ENCODE measurements at regions of chrX and their contacts with region 1.

Region 1: DNA sequence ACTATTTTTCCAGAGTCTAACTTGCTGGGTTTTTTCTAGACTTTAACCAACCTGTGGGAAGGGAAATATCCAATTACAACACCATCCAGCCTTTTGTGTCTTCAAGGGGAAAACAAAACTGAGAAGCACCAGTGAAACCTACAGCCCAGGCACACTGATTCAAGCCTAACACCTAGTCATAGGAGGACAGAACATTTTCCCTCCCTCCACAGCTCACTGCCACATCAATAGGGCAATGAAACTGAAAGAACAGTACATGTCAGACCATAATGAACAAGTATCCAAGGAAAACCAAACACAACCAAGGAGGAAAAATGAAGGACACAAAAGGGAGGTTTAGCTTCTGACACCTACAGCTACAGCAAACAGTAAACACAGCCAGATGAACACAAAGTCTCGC is 17.6 kb downstream of the MAGEA8 start:
- DNase-seq: no peak
- H3K4me3 Mint-ChIP-seq: no peak overlapping the region
- H3K27ac Mint-ChIP-seq: no peak overlapping the region
- H3K4me1 Mint-ChIP-seq: peaks cover 9% of the 10 kb centered on the region
- H3K27me3 Mint-ChIP-seq: no peaks in the 10 kb centered on the region

Region 2: GRCh38 chrX:149837639-149838038 is 60.9 kb before region 1 on chrX:
- intact Hi-C with region 1: loop called (anchors 2 kb)
- DNase-seq: peak; percentile 57
- H3K4me3 Mint-ChIP-seq: no peak overlapping the region
- H3K27ac Mint-ChIP-seq: peak overlapping the region; percentile 56
- H3K4me1 Mint-ChIP-seq: peaks cover 6% of the 10 kb centered on the region
- H3K27me3 Mint-ChIP-seq: peaks cover 1% of the 10 kb centered on the region

Measured in activated CD4-positive, alpha-beta T cell treated with anti-CD3 and anti-CD28 coated beads, Interleukin-2, amount 10 ng/mL, durations not matched to agents 24 days and 14 days (primary cell).